ENCODE measurements at regions of chr2 and their contacts with region 1.

Region 1: GRCh38 chr2:182259629-182260150 is 167.1 kb downstream of the PDE1A start:
- DNase-seq: peak; percentile 47
- ATAC-seq: peak; percentile 17; the same call in 1 of the 2 replicates
- H3K4me3 ChIP-seq: no peak overlapping the region
- H3K27ac ChIP-seq: no peak overlapping the region
- H3K4me1 ChIP-seq: no peaks in the 10 kb centered on the region
- H3K27me3 ChIP-seq: no peaks in the 10 kb centered on the region
- CTCF ChIP-seq: no peak
- POLR2A ChIP-seq: no peak
- RAD21 ChIP-seq: no peak

Region 2: GRCh38 chr2:180463608-180464007 is 1796.1 kb before region 1 on chr2:
- CTCF ChIA-PET with region 1: no interaction called
- POLR2A ChIA-PET with region 1: no interaction called
- dilution Hi-C with region 1: no loop called
- in situ Hi-C with region 1: no loop called
- intact Hi-C with region 1: no loop called
- DNase-seq: no peak
- ATAC-seq: no peak
- H3K4me3 ChIP-seq: no peak overlapping the region
- H3K27ac ChIP-seq: no peak overlapping the region
- H3K4me1 ChIP-seq: no peaks in the 10 kb centered on the region
- H3K27me3 ChIP-seq: no peaks in the 10 kb centered on the region
- CTCF ChIP-seq: no peak
- POLR2A ChIP-seq: no peak
- RAD21 ChIP-seq: no peak

Region 3: GRCh38 chr2:181632733-181633401 is 626.8 kb before region 1 on chr2:
- CTCF ChIA-PET with region 1: interaction called, 10 read pairs
- POLR2A ChIA-PET with region 1: no interaction called
- dilution Hi-C with region 1: no loop called
- in situ Hi-C with region 1: no loop called
- intact Hi-C with region 1: no loop called
- DNase-seq: no peak
- ATAC-seq: no peak
- H3K4me3 ChIP-seq: no peak overlapping the region
- H3K27ac ChIP-seq: no peak overlapping the region
- H3K4me1 ChIP-seq: no peaks in the 10 kb centered on the region
- H3K27me3 ChIP-seq: peaks cover 2% of the 10 kb centered on the region; the same call in 1 of the 2 replicates
- CTCF ChIP-seq: no peak
- POLR2A ChIP-seq: no peak
- RAD21 ChIP-seq: no peak

Region 4: DNA sequence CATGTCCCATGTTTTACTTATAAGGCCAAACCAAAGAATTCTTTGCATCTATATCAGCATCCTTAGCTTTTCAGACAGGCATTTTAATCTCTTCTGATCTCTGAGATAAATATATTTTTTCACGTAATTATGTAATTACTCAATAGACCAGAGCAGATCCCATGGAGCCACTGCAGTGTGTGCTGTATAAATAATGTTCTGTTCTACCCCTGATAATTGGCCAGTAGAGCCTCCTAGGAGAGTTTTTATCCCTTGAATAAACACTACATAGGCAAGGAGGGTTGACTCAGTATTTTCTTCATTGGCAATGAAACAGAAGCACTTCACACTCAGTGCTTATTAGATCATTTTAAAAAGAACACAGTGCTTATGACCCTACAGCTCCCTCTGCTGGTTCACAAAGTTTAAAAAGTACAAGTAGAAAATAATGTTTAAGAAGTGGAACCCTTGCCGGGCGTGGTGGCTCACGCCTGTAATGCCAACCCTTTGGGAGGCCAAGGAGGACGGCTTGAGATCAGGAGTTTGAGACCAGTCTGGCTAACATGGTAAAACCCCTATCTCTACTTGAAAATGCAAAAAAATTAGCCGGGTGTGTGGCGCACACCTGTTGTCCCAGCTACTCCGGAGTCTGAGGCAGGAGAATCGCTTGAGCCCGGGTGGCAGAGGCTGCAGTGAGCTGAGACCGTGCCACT is 182.1 kb before region 1 on chr2:
- CTCF ChIA-PET with region 1: no interaction called
- POLR2A ChIA-PET with region 1: no interaction called
- dilution Hi-C with region 1: no loop called
- in situ Hi-C with region 1: no loop called
- intact Hi-C with region 1: no loop called
- DNase-seq: peak; percentile 95
- ATAC-seq: peak; percentile 94
- H3K4me3 ChIP-seq: no peak overlapping the region
- H3K27ac ChIP-seq: peak overlapping the region; percentile 73
- H3K4me1 ChIP-seq: peaks cover 2% of the 10 kb centered on the region; the same call in 1 of the 2 replicates
- H3K27me3 ChIP-seq: no peaks in the 10 kb centered on the region
- CTCF ChIP-seq: peak; percentile 82
- POLR2A ChIP-seq: no peak
- RAD21 ChIP-seq: peak; percentile 87

Measured in IMR-90 (cell line).